Panc1 (cell line): ENCODE measurements at regions of chr1 and their contacts with region 1.

Region 1: GRCh38 chr1:65355031-65355712 is 45.8 kb downstream of the DNAJC6 start:
- DNase-seq: no peak
- ATAC-seq: no peak
- H3K4me3 ChIP-seq: no peak overlapping the region
- H3K27ac ChIP-seq: no peak overlapping the region
- H3K4me1 ChIP-seq: no peaks in the 10 kb centered on the region
- H3K27me3 ChIP-seq: no peaks in the 10 kb centered on the region
- CTCF ChIP-seq: no peak

Region 2: DNA sequence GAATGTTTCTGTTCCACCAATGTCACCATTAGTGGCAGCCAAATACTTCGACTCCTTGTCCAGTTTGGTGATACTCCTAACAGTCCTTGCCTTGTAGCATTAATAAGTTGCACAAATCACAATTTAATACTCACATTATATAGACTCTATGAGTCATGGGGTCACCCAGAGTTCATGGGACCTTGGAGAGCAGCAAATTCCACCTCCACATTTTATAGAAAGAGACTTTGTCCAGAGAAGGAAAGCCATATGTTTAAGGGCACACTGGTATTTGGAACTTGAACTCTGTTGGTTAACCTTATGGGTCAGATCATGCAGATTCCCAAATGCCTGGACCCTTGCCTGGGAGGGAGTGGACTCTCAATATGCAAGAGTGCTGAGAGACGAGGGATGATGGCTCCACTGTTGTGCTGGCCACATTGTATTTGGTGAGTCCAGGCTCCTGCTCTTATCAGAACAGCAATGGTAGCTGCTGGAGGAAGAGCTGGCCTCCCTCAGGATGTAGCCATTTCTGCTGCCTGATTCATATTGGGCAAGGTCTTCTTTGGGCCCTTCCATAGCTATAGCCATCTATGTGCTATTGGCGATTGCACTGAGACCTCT is 15.2 kb before region 1 on chr1:
- CTCF ChIA-PET with region 1: no interaction called
- POLR2A ChIA-PET with region 1: interaction called, 15 read pairs
- in situ Hi-C with region 1: no loop called
- intact Hi-C with region 1: no loop called
- DNase-seq: no peak
- ATAC-seq: no peak
- H3K4me3 ChIP-seq: no peak overlapping the region
- H3K27ac ChIP-seq: no peak overlapping the region
- H3K4me1 ChIP-seq: no peaks in the 10 kb centered on the region
- H3K27me3 ChIP-seq: no peaks in the 10 kb centered on the region
- CTCF ChIP-seq: no peak